ENCODE measurements at regions of chr3 and their contacts with region 1.

Region 1: GRCh38 chr3:113514265-113514769 is 639 bp downstream of the SPICE1 start:
- DNase-seq: no peak
- H3K4me3 Mint-ChIP-seq: no peak overlapping the region
- H3K27ac Mint-ChIP-seq: no peak overlapping the region
- H3K4me1 Mint-ChIP-seq: peaks cover 13% of the 10 kb centered on the region
- H3K27me3 Mint-ChIP-seq: peaks cover 26% of the 10 kb centered on the region

Region 2: DNA sequence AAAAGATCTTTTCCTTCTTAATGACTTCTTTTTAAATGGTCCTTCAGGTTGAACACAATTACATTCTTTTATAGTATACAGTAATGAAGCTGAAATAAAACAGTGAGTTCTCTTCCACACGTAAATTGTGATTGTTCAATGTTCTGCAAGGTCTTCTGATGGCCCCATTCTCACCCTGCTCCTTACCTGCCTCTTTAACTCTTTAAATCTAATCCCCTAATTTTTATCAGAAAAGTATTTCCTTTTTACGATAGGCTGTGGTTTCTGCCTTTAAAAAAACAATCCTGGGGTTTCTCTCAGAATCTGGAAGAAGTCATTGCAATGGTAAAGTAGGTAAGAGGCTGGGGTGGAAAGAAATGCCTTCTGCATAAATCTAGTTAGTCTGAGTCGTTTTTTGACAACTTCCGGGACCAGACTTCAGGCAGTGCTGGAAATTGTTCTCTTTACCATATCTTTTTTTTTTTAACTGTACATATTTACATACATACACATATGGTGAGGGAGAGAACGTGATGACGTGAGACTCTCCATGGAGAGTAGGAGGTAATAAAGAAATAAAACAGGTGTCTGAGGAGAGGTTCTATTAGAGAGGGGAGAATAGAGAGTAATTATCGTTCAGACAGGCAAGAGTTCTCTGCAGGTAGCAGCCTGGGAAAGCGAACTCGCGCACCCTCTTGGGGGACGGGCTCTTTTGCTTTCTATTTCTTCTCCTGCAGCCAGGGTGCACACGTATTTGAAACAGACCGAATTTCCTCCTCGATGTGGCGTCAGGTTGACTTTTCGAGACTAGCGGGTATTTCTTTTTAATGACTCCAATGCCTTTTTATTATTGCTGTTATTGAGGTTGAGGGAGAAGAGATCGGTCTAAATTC is 17.7 kb after region 1 on chr3 and contains the start of gene SIDT1:
- intact Hi-C with region 1: loop called (anchors 1 kb)
- DNase-seq: peak; percentile 92
- H3K4me3 Mint-ChIP-seq: peak within 1 kb of the TSS; percentile 91
- H3K27ac Mint-ChIP-seq: peak within 1 kb of the TSS; percentile 96
- H3K4me1 Mint-ChIP-seq: peaks cover 36% of the 10 kb centered on the region
- H3K27me3 Mint-ChIP-seq: peaks cover 11% of the 10 kb centered on the region
- total RNA-seq, gene SIDT1: 8.5 and 11.5 TPM in 2 replicates

Region 3: GRCh38 chr3:113606539-113607218 is 92.4 kb after region 1 on chr3:
- intact Hi-C with region 1: loop called (anchors 1 kb)
- DNase-seq: peak; percentile 85
- H3K4me3 Mint-ChIP-seq: peak overlapping the region; percentile 55
- H3K27ac Mint-ChIP-seq: peak overlapping the region; percentile 27
- H3K4me1 Mint-ChIP-seq: peaks cover 18% of the 10 kb centered on the region
- H3K27me3 Mint-ChIP-seq: no peaks in the 10 kb centered on the region

Region 4: GRCh38 chr3:113754494-113755159 is 240.3 kb after region 1 on chr3:
- intact Hi-C with region 1: no loop called
- DNase-seq: no peak
- H3K4me3 Mint-ChIP-seq: no peak overlapping the region
- H3K27ac Mint-ChIP-seq: no peak overlapping the region
- H3K4me1 Mint-ChIP-seq: peaks cover 5% of the 10 kb centered on the region
- H3K27me3 Mint-ChIP-seq: no peaks in the 10 kb centered on the region